Thyroid gland (tissue), 4 donors: ENCODE measurements at regions of chr11 and their contacts with region 1.

Region 1: GRCh38 chr11:35822815-35823495 is 120.9 kb upstream of the LDLRAD3 start:
- DNase-seq: no peak
- H3K4me3 ChIP-seq: no peak overlapping the region
- H3K27ac ChIP-seq: no peak overlapping the region
- H3K4me1 ChIP-seq: peaks cover 0 to 5% of the 10 kb centered on the region in 2 donors
- H3K27me3 ChIP-seq: no peaks in the 10 kb centered on the region
- CTCF ChIP-seq: no peak
- POLR2A ChIP-seq: no peak

Region 2: DNA sequence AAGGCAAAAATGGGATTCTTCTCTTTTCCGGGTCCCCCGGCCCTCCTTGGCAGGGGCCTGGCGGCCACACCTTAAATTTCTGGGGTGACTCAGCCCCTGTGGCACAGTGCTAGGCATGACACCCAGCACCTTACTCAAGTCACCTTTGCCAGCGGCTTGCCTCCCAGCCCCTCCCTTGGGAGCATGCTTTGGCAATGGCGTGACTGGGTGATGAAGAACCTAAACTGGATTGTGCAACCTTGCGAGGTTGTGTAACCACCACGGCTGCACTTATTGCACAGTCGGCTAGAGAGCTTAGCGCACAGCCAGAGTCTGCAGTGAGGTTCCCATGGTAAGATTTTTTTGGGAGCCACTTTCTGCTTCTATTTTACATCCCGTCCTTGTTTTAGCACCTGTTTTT is 104.8 kb after region 1 on chr11:
- intact Hi-C with region 1: no loop called
- DNase-seq: peak; percentile 5 to 13
- H3K4me3 ChIP-seq: no peak overlapping the region
- H3K27ac ChIP-seq: no peak overlapping the region
- H3K4me1 ChIP-seq: no peaks in the 10 kb centered on the region
- H3K27me3 ChIP-seq: no peaks in the 10 kb centered on the region
- CTCF ChIP-seq: no peak
- POLR2A ChIP-seq: no peak

Region 3: GRCh38 chr11:36265793-36266628 is 443.1 kb after region 1 on chr11:
- intact Hi-C with region 1: loop called (anchors 10 kb)
- DNase-seq: peak; percentile 51 to 61
- H3K4me3 ChIP-seq: no peak overlapping the region
- H3K27ac ChIP-seq: no peak overlapping the region
- H3K4me1 ChIP-seq: no peaks in the 10 kb centered on the region
- H3K27me3 ChIP-seq: no peaks in the 10 kb centered on the region
- CTCF ChIP-seq: peak; percentile 32 to 82 (median 60)
- POLR2A ChIP-seq: no peak